Activated CD4-positive, alpha-beta T cell treated with anti-CD3 and anti-CD28 coated beads for 36 hours (primary cell): ENCODE measurements at regions of chr12 and their contacts with region 1.

Region 1: GRCh38 chr12:92078167-92079053 is 67.2 kb downstream of the BTG1 start:
- DNase-seq: peak; percentile 38
- ATAC-seq: peak; percentile 87
- H3K4me3 Mint-ChIP-seq: no peak overlapping the region
- H3K27ac Mint-ChIP-seq: peak overlapping the region; percentile 87
- H3K4me1 Mint-ChIP-seq: peaks cover 79% of the 10 kb centered on the region
- H3K27me3 Mint-ChIP-seq: no peaks in the 10 kb centered on the region

Region 2: DNA sequence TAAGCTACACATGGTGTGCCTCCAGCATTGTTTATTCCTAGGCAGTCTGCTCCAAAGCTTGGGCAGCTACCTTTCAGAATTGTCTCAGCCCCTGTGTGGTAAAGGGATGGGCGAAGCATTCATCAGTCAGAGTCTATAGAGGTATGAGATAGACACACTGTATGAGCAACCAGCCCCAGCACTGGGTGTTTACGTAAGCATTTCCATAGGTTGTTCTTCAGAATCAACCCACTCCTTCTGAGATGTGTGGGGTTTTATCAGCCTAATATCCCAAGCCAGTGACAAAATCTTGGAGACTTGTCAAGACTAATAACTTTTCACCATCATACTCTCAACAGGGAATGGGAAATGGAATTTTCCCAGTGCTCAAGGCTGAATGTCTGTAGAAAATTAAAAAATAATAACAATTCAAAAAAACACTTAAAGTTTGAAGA is 31.0 kb before region 1 on chr12:
- CTCF ChIA-PET with region 1: interaction called, 5 read pairs
- POLR2A ChIA-PET with region 1: no interaction called
- intact Hi-C with region 1: loop called in 1 of 2 experiments (anchors 2 kb)
- DNase-seq: peak; percentile 54
- ATAC-seq: peak; percentile 80
- H3K4me3 Mint-ChIP-seq: peak overlapping the region; percentile 41
- H3K27ac Mint-ChIP-seq: peak overlapping the region; percentile 86
- H3K4me1 Mint-ChIP-seq: peaks cover 85% of the 10 kb centered on the region
- H3K27me3 Mint-ChIP-seq: no peaks in the 10 kb centered on the region

Region 3: DNA sequence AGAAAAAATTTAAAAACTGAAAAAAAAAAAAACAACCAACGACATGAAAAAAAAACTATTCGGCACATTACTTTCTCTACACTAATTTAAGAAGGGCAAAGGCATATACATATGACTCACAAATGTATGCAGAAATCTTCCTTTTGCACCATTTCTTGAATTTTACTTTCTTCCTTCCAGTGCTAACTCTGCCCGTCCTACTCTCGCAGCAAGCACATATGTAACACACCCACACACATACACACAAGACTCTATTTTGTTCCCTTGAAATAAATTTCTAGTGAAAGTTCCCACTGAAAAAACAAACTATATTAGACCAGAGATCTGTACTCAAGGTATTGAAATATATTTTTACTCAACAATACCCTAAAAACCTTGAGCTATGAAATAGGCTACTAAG is 52.6 kb after region 1 on chr12:
- CTCF ChIA-PET with region 1: no interaction called
- POLR2A ChIA-PET with region 1: no interaction called
- intact Hi-C with region 1: loop called (anchors 1 to 2 kb)
- DNase-seq: no peak
- ATAC-seq: peak; percentile 45
- H3K4me3 Mint-ChIP-seq: peak overlapping the region; percentile 66
- H3K27ac Mint-ChIP-seq: peak overlapping the region; percentile 94
- H3K4me1 Mint-ChIP-seq: peaks cover 91% of the 10 kb centered on the region
- H3K27me3 Mint-ChIP-seq: no peaks in the 10 kb centered on the region